ENCODE measurements at regions of chr12 and their contacts with region 1.

Region 1: GRCh38 chr12:949453-950191 is at the start of gene RAD52:
- DNase-seq: peak; percentile 97 to 99 (median 98)
- ATAC-seq: peak; percentile 95
- H3K4me3 ChIP-seq: peak within 1 kb of the TSS; percentile 73 to 86
- H3K27ac ChIP-seq: peak within 1 kb of the TSS; percentile 91 to 93
- H3K4me1 ChIP-seq: peaks cover 0 to 10% of the 10 kb centered on the region in 2 donors
- H3K27me3 ChIP-seq: no peaks in the 10 kb centered on the region
- CTCF ChIP-seq: peak; percentile 94 to 98
- polyA plus RNA-seq, gene RAD52: 26.0 to 46.9 (median 40.4) TPM

Region 2: DNA sequence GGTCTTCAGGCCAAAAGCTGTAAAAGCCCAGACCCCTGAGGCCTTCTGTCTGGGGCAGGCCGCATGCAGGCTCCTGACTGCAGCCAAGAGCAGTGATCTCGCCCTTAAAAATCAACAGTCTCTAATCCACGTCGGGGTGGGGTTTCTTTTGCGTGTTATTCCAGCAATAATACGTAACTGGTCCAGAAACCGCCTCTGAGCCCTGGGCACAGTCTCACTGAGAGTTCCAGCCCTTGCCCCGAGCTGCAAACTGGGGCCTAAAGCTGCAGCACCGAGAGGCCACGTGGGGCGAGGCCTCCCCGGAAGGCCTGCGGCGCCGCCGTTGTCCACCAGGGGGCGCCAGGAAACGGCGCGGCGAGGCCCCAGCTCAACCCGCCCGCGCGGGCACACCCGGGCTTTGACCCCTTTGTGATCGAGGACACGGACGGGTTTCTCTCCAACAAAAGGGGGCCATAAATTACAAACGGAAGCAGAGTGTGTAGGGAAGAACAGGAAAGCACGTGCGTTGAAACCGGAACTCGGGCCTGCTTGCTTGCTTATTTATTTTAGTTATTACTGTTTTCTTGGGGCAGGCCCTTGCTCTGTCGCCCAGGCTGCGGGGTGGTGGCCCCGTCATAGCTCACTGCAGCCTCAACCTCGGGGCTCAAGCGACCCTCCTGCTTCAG is 373.5 kb before region 1 on chr12:
- intact Hi-C with region 1: loop called in 1 of 2 experiments (anchors 10 kb)
- DNase-seq: peak; percentile 69 to 98 (median 78)
- ATAC-seq: peak; percentile 83
- H3K4me3 ChIP-seq: no peak overlapping the region
- H3K27ac ChIP-seq: peak overlapping the region; percentile 53 to 63
- H3K4me1 ChIP-seq: peaks cover 16 to 54% of the 10 kb centered on the region in 2 donors
- H3K27me3 ChIP-seq: no peaks in the 10 kb centered on the region
- CTCF ChIP-seq: peak; percentile 98 to 100

Region 3: GRCh38 chr12:1054117-1054870 is 104.7 kb after region 1 on chr12:
- intact Hi-C with region 1: no loop called
- DNase-seq: peak in 1 of 4 donors; percentile 5
- ATAC-seq: no peak
- H3K4me3 ChIP-seq: no peak overlapping the region
- H3K27ac ChIP-seq: no peak overlapping the region
- H3K4me1 ChIP-seq: peaks cover 0 to 12% of the 10 kb centered on the region in 2 donors
- H3K27me3 ChIP-seq: no peaks in the 10 kb centered on the region
- CTCF ChIP-seq: no peak